ENCODE measurements at regions of chr11 and their contacts with region 1.

Region 1: GRCh38 chr11:8289492-8289918 is 25.8 kb upstream of the LMO1 start:
- DNase-seq: no peak

Region 2: DNA sequence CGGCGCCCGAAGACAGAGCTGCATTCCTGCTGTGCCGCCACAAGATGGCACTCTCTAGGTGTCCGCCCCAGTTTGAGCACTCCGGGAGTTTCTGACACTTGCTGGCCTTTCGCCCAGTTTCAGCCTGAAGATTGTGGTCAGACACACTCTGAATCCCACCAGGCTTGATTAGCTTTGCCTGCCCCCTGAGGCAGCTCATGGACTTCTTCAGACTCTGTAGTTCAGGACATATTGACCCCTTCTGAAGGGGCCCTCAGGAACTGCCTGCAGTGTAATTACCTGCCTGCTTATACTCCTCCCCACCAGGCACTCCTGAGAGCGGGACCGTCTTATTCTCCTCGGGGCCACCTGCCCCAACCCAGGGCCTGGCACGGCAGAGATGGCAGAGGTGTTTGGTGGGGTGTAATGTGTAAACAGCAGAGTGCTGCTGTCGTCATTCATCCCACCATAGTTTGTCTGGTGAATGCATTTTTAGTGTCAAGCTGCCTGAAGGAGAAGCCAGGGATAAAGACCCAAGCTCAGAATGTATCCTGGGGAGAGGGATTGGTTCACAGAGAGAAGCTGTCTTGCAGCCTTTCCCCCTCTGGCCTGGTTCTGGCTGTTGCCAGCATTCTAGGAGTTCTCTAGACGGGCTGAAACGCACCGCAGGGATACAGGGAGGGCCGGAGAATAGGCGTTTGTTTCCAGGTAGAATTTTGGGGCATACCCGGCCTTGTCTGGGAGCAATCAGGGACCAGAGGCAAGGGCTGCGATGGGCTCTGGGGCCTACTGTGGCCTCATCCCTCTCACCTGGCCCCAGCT is 256.0 kb before region 1 on chr11:
- intact Hi-C with region 1: no loop called
- DNase-seq: peak; percentile 58 to 96 (median 77)

Region 3: DNA sequence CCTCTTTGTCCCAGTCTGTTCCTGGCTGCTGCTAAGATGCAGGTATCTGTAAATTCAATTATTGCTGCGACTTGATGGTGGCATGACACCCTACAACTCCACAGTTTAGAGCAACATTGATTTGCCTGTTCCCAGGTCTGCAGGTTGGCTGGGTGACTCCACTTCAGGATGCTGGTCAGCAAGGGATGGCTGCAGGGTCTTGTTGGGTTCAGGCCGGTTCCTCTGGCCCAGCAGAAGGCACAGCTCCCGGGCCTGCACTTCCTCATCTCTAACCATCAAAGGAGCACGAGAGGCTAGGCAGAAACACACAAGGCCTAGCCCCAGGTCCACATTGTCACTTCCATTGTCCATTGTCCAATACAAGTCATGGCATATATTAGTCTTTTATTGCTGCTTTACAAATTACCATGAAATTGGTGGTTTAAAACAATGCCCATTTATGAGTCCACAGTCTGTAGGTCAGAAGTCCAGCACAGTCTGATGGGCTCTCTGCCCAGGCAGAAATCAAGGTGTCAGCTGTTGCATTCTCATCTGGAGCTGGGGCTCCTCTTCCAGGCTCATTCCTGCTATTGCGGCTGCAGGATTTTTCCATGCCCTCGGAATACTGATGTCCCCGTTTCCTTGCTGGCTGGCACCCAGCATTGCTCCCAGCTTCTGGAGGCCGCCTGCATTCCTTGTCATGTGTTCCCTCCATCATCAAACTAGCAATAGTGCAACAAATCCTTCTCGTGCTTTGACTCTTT is 70.8 kb after region 1 on chr11:
- intact Hi-C with region 1: loop called (anchors 2 kb)
- DNase-seq: peak in 1 of 10 donors; percentile 63

Measured in posterior cingulate gyrus (tissue), 11 donors.